B cell (primary cell): ENCODE measurements at regions of chr20 and their contacts with region 1.

Region 1: GRCh38 chr20:17504898-17505635 is 26.1 kb downstream of the BFSP1 start:
- DNase-seq: peak; percentile 83
- ATAC-seq: peak; percentile 84
- H3K4me3 ChIP-seq: peak overlapping the region; percentile 47 to 81 (median 59)
- H3K4me3 Mint-ChIP-seq: peak overlapping the region; percentile 94
- H3K27ac ChIP-seq: peak overlapping the region; percentile 20 to 51
- H3K27ac Mint-ChIP-seq: peak overlapping the region; percentile 60
- H3K4me1 ChIP-seq: peaks cover 9 to 17% of the 10 kb centered on the region in 2 donors
- H3K4me1 Mint-ChIP-seq: peaks cover 13% of the 10 kb centered on the region
- H3K27me3 ChIP-seq: no peaks in the 10 kb centered on the region
- H3K27me3 Mint-ChIP-seq: peaks cover 7% of the 10 kb centered on the region
- CTCF ChIP-seq: peak; percentile 80

Region 2: GRCh38 chr20:17569616-17570346 is 64.7 kb after region 1 on chr20 and contains the start of gene DSTN:
- CTCF ChIA-PET with region 1: interaction called, 9 read pairs
- POLR2A ChIA-PET with region 1: no interaction called
- intact Hi-C with region 1: loop called (anchors 2 kb)
- DNase-seq: peak; percentile 93
- ATAC-seq: peak; percentile 91
- H3K4me3 ChIP-seq: peak within 1 kb of the TSS; percentile 77 to 97 (median 83)
- H3K4me3 Mint-ChIP-seq: peak within 1 kb of the TSS; percentile 94
- H3K27ac ChIP-seq: peak within 1 kb of the TSS in 1 of 2 donors; percentile 72
- H3K27ac Mint-ChIP-seq: peak within 1 kb of the TSS; percentile 89
- H3K4me1 ChIP-seq: peaks cover 11 to 14% of the 10 kb centered on the region in 2 donors
- H3K4me1 Mint-ChIP-seq: peaks cover 20% of the 10 kb centered on the region
- H3K27me3 ChIP-seq: peaks cover 0 to 12% (median 2%) of the 10 kb centered on the region in 4 experiments
- H3K27me3 Mint-ChIP-seq: peaks cover 8% of the 10 kb centered on the region
- CTCF ChIP-seq: no peak
- total RNA-seq, gene DSTN: 12.9 and 13.4 TPM in 2 replicates

Region 3: DNA sequence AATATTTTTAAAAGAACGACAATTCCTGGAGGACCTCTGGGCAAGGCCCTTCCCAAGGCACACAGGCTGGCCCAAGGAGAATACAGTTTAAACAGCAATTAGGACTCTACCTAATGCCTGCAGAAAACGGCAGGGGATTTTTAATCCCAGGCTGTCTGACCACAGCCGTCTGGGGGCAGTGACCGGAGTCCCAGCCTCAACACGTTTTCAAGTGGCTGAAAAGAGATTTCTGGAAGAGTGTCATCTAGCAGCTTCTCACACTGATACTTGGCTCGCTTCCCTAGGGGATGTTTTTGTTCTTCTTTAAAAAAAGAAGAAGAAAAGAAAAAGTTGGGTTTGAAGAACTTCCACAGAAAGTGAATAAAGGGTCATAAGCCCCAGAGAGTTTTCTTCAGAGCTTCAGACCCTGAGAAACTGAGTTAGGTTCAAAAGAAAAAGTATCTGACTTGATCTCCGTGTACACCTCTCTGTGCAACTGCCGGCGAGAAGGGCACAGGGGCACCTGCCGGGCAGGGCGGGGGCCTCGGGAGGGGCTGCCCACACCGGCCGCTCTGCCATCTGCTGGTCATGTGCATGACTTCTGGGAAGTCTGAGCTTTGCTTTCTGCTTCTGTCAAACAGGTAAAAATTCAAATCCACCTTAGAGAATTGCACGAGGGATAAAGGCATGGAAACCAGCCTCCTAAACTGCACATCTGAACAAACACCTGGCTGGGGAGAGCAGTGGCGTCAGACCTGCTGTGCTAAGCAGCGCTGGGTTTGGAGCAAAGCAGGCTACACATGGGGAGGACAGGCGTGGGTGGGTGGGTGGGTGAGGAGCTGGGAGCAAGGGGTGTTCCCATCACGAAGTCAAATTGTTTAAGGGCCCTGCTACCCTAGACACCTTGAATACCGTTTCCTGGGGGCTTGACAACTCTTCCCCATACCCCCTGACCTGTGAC is 144.0 kb after region 1 on chr20:
- CTCF ChIA-PET with region 1: interaction called, 15 read pairs
- POLR2A ChIA-PET with region 1: interaction called, 3 read pairs
- intact Hi-C with region 1: loop called (anchors 10 kb)
- DNase-seq: peak; percentile 61
- ATAC-seq: peak; percentile 81
- H3K4me3 ChIP-seq: peak overlapping the region in 1 of 5 experiments; percentile 6
- H3K4me3 Mint-ChIP-seq: peak overlapping the region; percentile 4
- H3K27ac ChIP-seq: no peak overlapping the region
- H3K27ac Mint-ChIP-seq: no peak overlapping the region
- H3K4me1 ChIP-seq: peaks cover 8 to 18% of the 10 kb centered on the region in 2 donors
- H3K4me1 Mint-ChIP-seq: peaks cover 22% of the 10 kb centered on the region
- H3K27me3 ChIP-seq: no peaks in the 10 kb centered on the region
- H3K27me3 Mint-ChIP-seq: no peaks in the 10 kb centered on the region
- CTCF ChIP-seq: peak; percentile 46

Region 4: GRCh38 chr20:17938871-17939619 is 434.0 kb after region 1 on chr20:
- CTCF ChIA-PET with region 1: interaction called, 15 read pairs
- POLR2A ChIA-PET with region 1: no interaction called
- intact Hi-C with region 1: loop called (anchors 1 kb)
- DNase-seq: peak; percentile 79
- ATAC-seq: peak; percentile 89
- H3K4me3 ChIP-seq: no peak overlapping the region
- H3K4me3 Mint-ChIP-seq: peak overlapping the region; percentile 54
- H3K27ac ChIP-seq: peak overlapping the region in 1 of 2 donors; percentile 55
- H3K27ac Mint-ChIP-seq: peak overlapping the region; percentile 56
- H3K4me1 ChIP-seq: peaks cover 24 to 26% of the 10 kb centered on the region in 2 donors
- H3K4me1 Mint-ChIP-seq: peaks cover 36% of the 10 kb centered on the region
- H3K27me3 ChIP-seq: no peaks in the 10 kb centered on the region
- H3K27me3 Mint-ChIP-seq: no peaks in the 10 kb centered on the region
- CTCF ChIP-seq: peak; percentile 88

Region 5: GRCh38 chr20:17995967-17996819 is 491.1 kb after region 1 on chr20:
- CTCF ChIA-PET with region 1: interaction called, 22 read pairs
- POLR2A ChIA-PET with region 1: interaction called, 3 read pairs
- intact Hi-C with region 1: loop called (anchors 1 kb)
- DNase-seq: peak; percentile 79
- ATAC-seq: peak; percentile 94
- H3K4me3 ChIP-seq: no peak overlapping the region
- H3K4me3 Mint-ChIP-seq: no peak overlapping the region
- H3K27ac ChIP-seq: no peak overlapping the region
- H3K27ac Mint-ChIP-seq: peak overlapping the region; percentile 54
- H3K4me1 ChIP-seq: peaks cover 16% of the 10 kb centered on the region in 2 donors
- H3K4me1 Mint-ChIP-seq: peaks cover 22% of the 10 kb centered on the region
- H3K27me3 ChIP-seq: no peaks in the 10 kb centered on the region
- H3K27me3 Mint-ChIP-seq: peaks cover 3% of the 10 kb centered on the region
- CTCF ChIP-seq: peak; percentile 99

Region 6: GRCh38 chr20:18019070-18019469 is 514.0 kb after region 1 on chr20:
- CTCF ChIA-PET with region 1: interaction called, 3 read pairs
- POLR2A ChIA-PET with region 1: no interaction called
- intact Hi-C with region 1: loop called (anchors 2 kb)
- DNase-seq: peak; percentile 47
- ATAC-seq: peak; percentile 80
- H3K4me3 ChIP-seq: no peak overlapping the region
- H3K4me3 Mint-ChIP-seq: no peak overlapping the region
- H3K27ac ChIP-seq: no peak overlapping the region
- H3K27ac Mint-ChIP-seq: no peak overlapping the region
- H3K4me1 ChIP-seq: no peaks in the 10 kb centered on the region
- H3K4me1 Mint-ChIP-seq: peaks cover 3% of the 10 kb centered on the region
- H3K27me3 ChIP-seq: peaks cover 0 to 2% (median 0%) of the 10 kb centered on the region in 4 experiments
- H3K27me3 Mint-ChIP-seq: no peaks in the 10 kb centered on the region
- CTCF ChIP-seq: peak; percentile 68

Region 7: DNA sequence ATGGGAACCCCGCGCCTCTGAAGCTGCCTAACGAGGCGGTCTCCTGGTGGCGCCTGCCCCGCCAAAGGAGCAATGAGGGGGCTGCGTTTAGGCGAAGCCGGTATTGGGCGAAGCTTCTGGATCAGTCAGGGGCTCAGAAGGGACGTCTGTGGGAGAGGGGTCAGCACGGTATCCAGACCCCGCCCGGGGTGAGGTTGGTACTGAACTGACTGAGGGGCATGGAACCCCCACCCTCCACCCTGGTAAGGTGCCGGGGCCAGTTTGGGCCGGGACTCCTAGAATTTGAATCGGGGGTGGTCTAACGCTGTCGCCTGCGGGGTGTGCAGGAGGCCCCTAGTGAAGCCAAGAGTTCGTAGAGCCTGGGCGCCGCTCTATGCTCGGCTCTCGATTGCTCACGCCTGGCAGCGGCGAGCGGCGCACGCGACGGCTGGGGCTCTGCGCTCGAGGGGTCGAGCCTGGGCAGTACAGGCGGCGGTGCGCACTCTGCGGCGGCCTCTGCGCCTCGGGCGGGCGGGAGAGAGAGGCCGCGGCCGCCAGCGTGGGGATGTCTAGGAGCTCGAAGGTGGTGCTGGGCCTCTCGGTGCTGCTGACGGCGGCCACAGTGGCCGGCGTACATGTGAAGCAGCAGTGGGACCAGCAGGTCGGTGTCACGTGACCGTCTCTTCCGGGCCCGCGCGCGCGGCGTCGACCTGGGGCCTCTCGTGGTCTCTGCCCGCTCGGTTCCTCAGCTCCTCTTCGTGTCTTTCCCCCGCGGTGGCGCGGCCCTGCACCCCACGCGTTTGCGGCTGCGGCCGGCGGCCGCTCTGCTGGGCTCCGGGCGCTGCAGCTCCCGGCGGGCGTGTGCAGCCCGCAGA is 632.6 kb after region 1 on chr20 and contains the starts of genes KAT14 and PET117:
- CTCF ChIA-PET with region 1: no interaction called
- POLR2A ChIA-PET with region 1: no interaction called
- intact Hi-C with region 1: loop called (anchors 1 kb)
- DNase-seq: peak; percentile 97
- ATAC-seq: peak; percentile 88
- H3K4me3 ChIP-seq: peak within 1 kb of the TSS; percentile 48 to 93 (median 85)
- H3K4me3 Mint-ChIP-seq: peak within 1 kb of the TSS; percentile 92
- H3K27ac ChIP-seq: peak within 1 kb of the TSS; percentile 65 to 77
- H3K27ac Mint-ChIP-seq: peak within 1 kb of the TSS; percentile 95
- H3K4me1 ChIP-seq: peaks cover 15 to 25% of the 10 kb centered on the region in 2 donors
- H3K4me1 Mint-ChIP-seq: peaks cover 27% of the 10 kb centered on the region
- H3K27me3 ChIP-seq: peaks cover 0 to 4% (median 0%) of the 10 kb centered on the region in 4 experiments
- H3K27me3 Mint-ChIP-seq: no peaks in the 10 kb centered on the region
- CTCF ChIP-seq: no peak
- total RNA-seq, gene KAT14: 15.1 and 15.5 TPM in 2 replicates
- total RNA-seq, gene PET117: 10.7 and 13.0 TPM in 2 replicates